ENCODE measurements at regions of chr7 and their contacts with region 1.

Region 1: GRCh38 chr7:36161981-36162380 is 8.9 kb downstream of the EEPD1 start:
- DNase-seq: no peak
- ATAC-seq: no peak
- H3K4me3 ChIP-seq: no peak overlapping the region
- H3K27ac ChIP-seq: no peak overlapping the region
- H3K4me1 ChIP-seq: peaks cover 47% of the 10 kb centered on the region
- H3K27me3 ChIP-seq: no peaks in the 10 kb centered on the region
- CTCF ChIP-seq: no peak
- POLR2A ChIP-seq: no peak

Region 2: DNA sequence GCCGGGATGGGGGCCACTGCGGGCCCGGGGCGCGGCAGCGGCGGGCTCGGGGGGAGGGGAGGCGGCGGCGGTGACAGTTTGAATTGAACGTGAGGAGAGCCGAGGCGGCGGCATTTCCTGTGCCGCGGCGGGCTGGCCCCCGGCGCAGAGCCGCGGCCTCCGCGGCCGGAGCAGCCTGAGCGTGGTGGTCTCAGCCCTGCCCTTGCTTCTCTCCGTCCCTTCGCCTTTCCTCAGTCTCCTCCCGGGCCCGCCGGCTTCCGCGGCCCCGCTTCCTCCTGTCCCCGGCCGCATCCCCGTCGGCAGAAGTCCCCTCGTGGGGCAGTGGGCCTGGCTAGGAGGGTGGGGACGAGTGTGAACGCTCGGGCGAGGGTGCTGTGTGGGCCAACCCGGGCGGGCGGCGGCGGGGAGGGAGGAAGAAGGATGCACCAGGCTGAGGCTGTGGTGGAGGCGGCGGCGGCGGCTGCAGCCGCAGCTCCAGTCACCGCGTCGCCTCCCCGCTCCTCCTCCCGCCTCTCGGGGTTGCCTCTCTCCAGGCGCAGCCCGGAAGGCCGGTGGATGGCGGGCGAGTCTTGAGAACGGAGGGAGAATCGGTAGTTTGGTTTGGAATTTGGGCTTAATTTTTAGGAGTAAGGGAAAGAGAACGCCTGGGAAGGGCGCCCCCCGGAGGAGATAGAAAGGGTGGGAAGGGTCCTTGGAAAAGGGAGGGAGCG is 360.4 kb before region 1 on chr7:
- intact Hi-C with region 1: no loop called
- DNase-seq: peak; percentile 62 to 70 (median 67)
- ATAC-seq: peak; percentile 31
- H3K4me3 ChIP-seq: peak overlapping the region; percentile 47 to 88
- H3K27ac ChIP-seq: peak overlapping the region; percentile 91 to 97 (median 93)
- H3K4me1 ChIP-seq: peaks cover 25% of the 10 kb centered on the region
- H3K27me3 ChIP-seq: no peaks in the 10 kb centered on the region
- CTCF ChIP-seq: peak; percentile 23 to 67 (median 46)
- POLR2A ChIP-seq: no peak

Region 3: GRCh38 chr7:36264123-36264801 is 102.3 kb after region 1 on chr7:
- intact Hi-C with region 1: loop called (anchors 10 kb)
- DNase-seq: peak in 1 of 4 donors; percentile 35
- ATAC-seq: peak; percentile 35
- H3K4me3 ChIP-seq: no peak overlapping the region
- H3K27ac ChIP-seq: peak overlapping the region in 1 of 4 donors; percentile 14
- H3K4me1 ChIP-seq: peaks cover 20% of the 10 kb centered on the region
- H3K27me3 ChIP-seq: no peaks in the 10 kb centered on the region
- CTCF ChIP-seq: no peak
- POLR2A ChIP-seq: no peak

Region 4: GRCh38 chr7:36348256-36348655 is 186.3 kb after region 1 on chr7:
- intact Hi-C with region 1: no loop called
- DNase-seq: no peak
- ATAC-seq: no peak
- H3K4me3 ChIP-seq: no peak overlapping the region
- H3K27ac ChIP-seq: no peak overlapping the region
- H3K4me1 ChIP-seq: peaks cover 26% of the 10 kb centered on the region
- H3K27me3 ChIP-seq: no peaks in the 10 kb centered on the region
- CTCF ChIP-seq: no peak
- POLR2A ChIP-seq: no peak